Panc1 (cell line): ENCODE measurements at regions of chr7 and their contacts with region 1.

Region 1: DNA sequence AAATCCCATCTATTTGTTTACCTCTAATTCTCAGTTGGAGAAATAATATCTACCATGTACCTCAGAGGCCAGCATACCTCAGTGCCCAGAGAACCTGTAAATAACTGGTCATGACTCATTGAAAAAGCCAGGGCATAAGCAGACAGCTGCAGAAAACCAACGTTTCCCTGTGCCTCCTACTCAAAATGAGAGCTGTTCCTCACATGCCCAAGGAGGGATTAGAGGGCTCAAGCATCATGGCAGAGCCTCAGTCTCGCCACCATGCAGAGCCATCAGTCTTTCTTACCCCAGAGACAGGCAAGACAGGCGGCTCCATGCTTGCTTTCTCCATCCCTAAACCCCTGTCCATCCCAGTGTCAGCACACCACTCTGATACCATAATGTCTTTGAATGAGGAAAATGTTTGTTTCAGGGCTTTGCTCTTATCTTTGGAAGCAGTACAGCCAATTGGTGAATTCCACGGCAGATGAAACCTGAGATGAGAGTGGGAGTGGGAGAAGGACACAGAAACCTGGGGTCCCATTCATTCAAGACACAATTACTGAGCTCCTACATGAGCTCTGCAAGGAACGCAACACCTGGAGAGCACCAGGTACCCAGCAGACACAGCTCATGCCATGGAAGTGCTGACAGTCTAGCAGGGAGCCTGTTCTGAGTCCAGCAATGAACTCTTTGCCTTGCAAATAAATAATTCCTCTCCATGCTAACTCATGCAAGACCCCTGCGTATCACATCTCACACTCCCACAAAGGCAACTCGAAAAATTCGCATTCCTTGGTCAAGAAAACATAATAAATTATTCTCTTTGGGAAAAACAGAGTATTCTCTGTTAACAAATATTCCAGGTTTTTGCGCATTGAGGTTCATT is 21.1 kb downstream of the PON1 start:
- DNase-seq: no peak
- ATAC-seq: no peak
- H3K4me3 ChIP-seq: no peak overlapping the region
- H3K27ac ChIP-seq: no peak overlapping the region
- H3K4me1 ChIP-seq: no peaks in the 10 kb centered on the region
- H3K27me3 ChIP-seq: no peaks in the 10 kb centered on the region
- CTCF ChIP-seq: no peak

Region 2: DNA sequence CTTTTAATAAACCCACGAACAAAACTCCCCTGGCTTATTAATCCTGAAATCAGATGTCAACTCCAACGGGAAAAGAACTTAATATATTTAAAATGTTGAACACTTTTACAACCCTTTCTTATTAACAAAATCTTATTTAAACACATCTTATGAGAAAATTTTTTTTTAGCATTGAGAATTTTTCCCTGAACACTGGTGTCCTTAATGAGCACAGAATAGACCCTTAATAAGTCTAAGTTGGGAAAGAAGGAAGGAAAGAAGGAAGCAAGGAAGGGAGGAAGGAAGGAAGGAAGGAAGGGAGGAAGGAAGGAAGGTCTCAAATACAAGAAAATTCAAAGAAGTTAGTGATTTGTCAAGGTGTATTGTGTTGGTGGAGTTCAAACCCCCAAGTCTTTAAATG is 1037.8 kb before region 1 on chr7:
- CTCF ChIA-PET with region 1: interaction called, 12 read pairs
- POLR2A ChIA-PET with region 1: no interaction called
- in situ Hi-C with region 1: no loop called
- intact Hi-C with region 1: no loop called
- DNase-seq: no peak
- ATAC-seq: no peak
- H3K4me3 ChIP-seq: no peak overlapping the region
- H3K27ac ChIP-seq: no peak overlapping the region
- H3K4me1 ChIP-seq: no peaks in the 10 kb centered on the region
- H3K27me3 ChIP-seq: no peaks in the 10 kb centered on the region
- CTCF ChIP-seq: no peak

Region 3: GRCh38 chr7:94980418-94981142 is 322.7 kb before region 1 on chr7:
- CTCF ChIA-PET with region 1: interaction called, 6 read pairs
- POLR2A ChIA-PET with region 1: interaction called, 13 read pairs
- in situ Hi-C with region 1: no loop called
- intact Hi-C with region 1: no loop called
- DNase-seq: no peak
- ATAC-seq: no peak
- H3K4me3 ChIP-seq: no peak overlapping the region
- H3K27ac ChIP-seq: no peak overlapping the region
- H3K4me1 ChIP-seq: no peaks in the 10 kb centered on the region
- H3K27me3 ChIP-seq: no peaks in the 10 kb centered on the region
- CTCF ChIP-seq: no peak

Region 4: DNA sequence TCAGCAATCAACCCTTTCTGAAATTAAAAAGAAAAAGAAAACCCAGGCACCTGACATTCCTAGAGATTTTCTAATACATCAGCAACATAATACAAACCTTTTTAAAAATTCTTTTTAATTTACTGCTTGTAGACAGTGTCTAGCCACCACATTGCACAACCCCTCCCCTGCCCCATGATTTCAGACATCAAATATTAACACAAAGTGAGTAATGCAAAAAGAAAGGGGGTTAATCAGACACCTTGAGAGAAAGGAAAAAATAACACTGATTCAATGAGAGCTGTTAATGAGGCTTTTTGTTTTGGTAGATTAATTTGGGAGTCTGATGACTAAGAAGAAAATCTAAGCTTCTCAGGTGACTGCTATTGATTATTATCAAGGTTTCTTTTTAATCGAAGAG is 963.3 kb after region 1 on chr7:
- CTCF ChIA-PET with region 1: no interaction called
- POLR2A ChIA-PET with region 1: no interaction called
- in situ Hi-C with region 1: no loop called
- intact Hi-C with region 1: no loop called
- DNase-seq: no peak
- ATAC-seq: no peak
- H3K4me3 ChIP-seq: no peak overlapping the region
- H3K27ac ChIP-seq: no peak overlapping the region
- H3K4me1 ChIP-seq: no peaks in the 10 kb centered on the region
- H3K27me3 ChIP-seq: no peaks in the 10 kb centered on the region
- CTCF ChIP-seq: no peak